HepG2 (cell line): ENCODE measurements at regions of chr10 and their contacts with region 1.

Region 1: DNA sequence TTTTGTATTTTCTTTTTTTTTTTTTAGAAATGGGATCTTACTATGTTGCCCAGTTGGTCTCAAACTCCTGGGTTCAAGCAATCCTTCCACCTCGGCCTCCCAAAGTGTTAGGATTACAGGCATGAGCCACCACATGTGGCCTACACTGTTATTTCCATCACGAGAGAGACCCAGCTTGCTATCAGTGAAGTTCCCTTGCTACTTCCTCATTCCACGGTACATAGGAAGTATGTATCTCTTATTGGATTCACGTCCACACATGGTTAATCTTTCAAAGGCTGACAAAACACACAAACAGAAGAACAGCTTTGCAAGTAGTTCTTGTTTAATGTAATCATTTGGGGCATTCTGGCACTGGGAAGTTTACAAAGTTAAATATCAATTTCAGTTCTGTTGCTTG is 50.9 kb downstream of the DCLRE1A start:
- DNase-seq: no peak
- ATAC-seq: no peak
- H3K4me3 ChIP-seq: no peak overlapping the region
- H3K27ac ChIP-seq: no peak overlapping the region
- H3K4me1 ChIP-seq: no peaks in the 10 kb centered on the region
- H3K27me3 ChIP-seq: peaks cover 0 to 3% of the 10 kb centered on the region in 2 experiments; a peak in 1 of 5 replicates
- CTCF ChIP-seq: no peak
- EP300 ChIP-seq: no peak
- POLR2A ChIP-seq: no peak
- RAD21 ChIP-seq: no peak

Region 2: GRCh38 chr10:113704637-113705343 is 98.2 kb before region 1 on chr10:
- CTCF ChIA-PET with region 1: no interaction called
- POLR2A ChIA-PET with region 1: no interaction called
- in situ Hi-C with region 1: no loop called
- intact Hi-C with region 1: loop called (anchors 1 kb)
- DNase-seq: peak; percentile 27
- ATAC-seq: peak; percentile 80
- H3K4me3 ChIP-seq: no peak overlapping the region
- H3K27ac ChIP-seq: no peak overlapping the region
- H3K4me1 ChIP-seq: no peaks in the 10 kb centered on the region
- H3K27me3 ChIP-seq: no peaks in the 10 kb centered on the region
- CTCF ChIP-seq: peak; percentile 65
- EP300 ChIP-seq: no peak
- POLR2A ChIP-seq: no peak
- RAD21 ChIP-seq: no peak